ENCODE measurements at regions of chr1 and their contacts with region 1.

Region 1: GRCh38 chr1:67853704-67854103 is 20.4 kb upstream of the GNG12 start:
- H3K4me3 ChIP-seq: no peak overlapping the region
- H3K27ac ChIP-seq: no peak overlapping the region
- H3K4me1 ChIP-seq: peaks cover 8% of the 10 kb centered on the region
- CTCF ChIP-seq: peak; percentile 86

Region 2: GRCh38 chr1:67840449-67840848 is 13.3 kb before region 1 on chr1:
- CTCF ChIA-PET with region 1: interaction called, 11 read pairs
- POLR2A ChIA-PET with region 1: interaction called, 3 read pairs
- H3K4me3 ChIP-seq: no peak overlapping the region
- H3K27ac ChIP-seq: no peak overlapping the region
- H3K4me1 ChIP-seq: peaks cover 8% of the 10 kb centered on the region; the same call in 1 of the 2 replicates
- CTCF ChIP-seq: no peak

Region 3: DNA sequence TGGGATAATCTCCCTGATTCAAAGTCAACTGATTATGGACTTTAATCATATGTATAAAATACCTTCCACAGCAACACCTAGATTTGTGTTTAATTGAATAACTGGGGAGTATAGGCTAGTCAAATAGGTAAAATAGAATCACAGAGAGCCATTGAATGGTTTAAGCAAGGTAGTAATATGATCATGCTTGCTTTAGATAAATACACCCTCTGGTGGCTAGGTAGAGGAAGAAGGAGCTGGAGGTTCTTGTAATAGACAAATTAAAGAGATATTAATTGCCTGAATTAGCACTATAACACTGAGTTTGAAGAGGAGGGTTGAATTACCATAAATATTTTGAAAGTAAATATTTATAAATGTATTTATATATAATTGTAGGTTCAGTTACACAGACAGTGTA is 156.4 kb after region 1 on chr1:
- CTCF ChIA-PET with region 1: interaction called, 14 read pairs
- POLR2A ChIA-PET with region 1: no interaction called
- H3K4me3 ChIP-seq: no peak overlapping the region
- H3K27ac ChIP-seq: no peak overlapping the region
- H3K4me1 ChIP-seq: no peaks in the 10 kb centered on the region
- CTCF ChIP-seq: no peak

Region 4: DNA sequence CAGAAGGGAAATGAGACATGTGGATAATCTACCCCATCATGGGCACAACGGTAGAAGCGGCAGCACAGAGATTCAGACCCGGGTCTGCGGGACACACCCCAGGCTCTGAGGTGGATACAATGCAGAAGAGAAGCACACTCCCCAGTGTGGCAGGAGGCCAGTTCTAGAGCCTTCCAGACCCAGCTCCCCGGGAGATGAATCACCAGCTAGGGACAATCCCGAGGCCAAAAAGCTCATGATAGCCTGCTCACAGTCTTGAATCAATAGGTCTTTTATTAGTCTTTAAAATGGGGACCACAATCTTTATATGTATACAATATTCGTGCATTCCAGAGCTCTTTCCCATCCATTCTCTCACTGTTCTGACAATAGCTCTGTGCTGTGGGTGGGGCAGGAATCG is 254.1 kb after region 1 on chr1:
- CTCF ChIA-PET with region 1: interaction called, 11 read pairs
- POLR2A ChIA-PET with region 1: no interaction called
- H3K4me3 ChIP-seq: no peak overlapping the region
- H3K27ac ChIP-seq: no peak overlapping the region
- H3K4me1 ChIP-seq: no peaks in the 10 kb centered on the region
- CTCF ChIP-seq: no peak

Region 5: DNA sequence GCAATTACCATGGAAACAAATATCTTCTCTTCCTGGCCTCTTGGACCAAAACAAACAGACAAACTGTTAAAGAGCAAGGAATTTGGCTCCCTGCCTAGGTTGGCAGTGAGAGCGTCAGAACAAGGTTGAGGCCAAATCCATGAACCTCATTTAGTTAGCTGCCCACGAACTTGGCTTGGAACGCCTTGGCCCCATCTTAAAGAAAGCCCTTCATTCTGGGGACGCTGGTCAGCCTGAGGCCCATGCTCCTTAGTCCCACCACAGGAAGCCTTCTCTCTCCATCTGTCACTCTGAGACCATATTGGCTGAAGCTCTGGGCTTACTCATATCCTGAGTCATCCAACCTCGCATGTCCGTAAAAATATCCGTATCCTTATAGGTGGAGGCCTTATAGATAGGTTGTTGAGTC is 259.1 kb after region 1 on chr1:
- CTCF ChIA-PET with region 1: interaction called, 12 read pairs
- POLR2A ChIA-PET with region 1: no interaction called
- H3K4me3 ChIP-seq: no peak overlapping the region
- H3K27ac ChIP-seq: no peak overlapping the region
- H3K4me1 ChIP-seq: no peaks in the 10 kb centered on the region
- CTCF ChIP-seq: no peak

Measured in HEK293 (cell line).